OCI-LY7 (cell line): ENCODE measurements at regions of chr10 and their contacts with region 1.

Region 1: GRCh38 chr10:25875556-25876165 is 58.4 kb upstream of the MYO3A start:
- DNase-seq: peak; percentile 88
- H3K4me3 ChIP-seq: no peak overlapping the region
- H3K27ac ChIP-seq: no peak overlapping the region
- H3K4me1 ChIP-seq: peaks cover 14% of the 10 kb centered on the region
- CTCF ChIP-seq: peak; percentile 98

Region 2: DNA sequence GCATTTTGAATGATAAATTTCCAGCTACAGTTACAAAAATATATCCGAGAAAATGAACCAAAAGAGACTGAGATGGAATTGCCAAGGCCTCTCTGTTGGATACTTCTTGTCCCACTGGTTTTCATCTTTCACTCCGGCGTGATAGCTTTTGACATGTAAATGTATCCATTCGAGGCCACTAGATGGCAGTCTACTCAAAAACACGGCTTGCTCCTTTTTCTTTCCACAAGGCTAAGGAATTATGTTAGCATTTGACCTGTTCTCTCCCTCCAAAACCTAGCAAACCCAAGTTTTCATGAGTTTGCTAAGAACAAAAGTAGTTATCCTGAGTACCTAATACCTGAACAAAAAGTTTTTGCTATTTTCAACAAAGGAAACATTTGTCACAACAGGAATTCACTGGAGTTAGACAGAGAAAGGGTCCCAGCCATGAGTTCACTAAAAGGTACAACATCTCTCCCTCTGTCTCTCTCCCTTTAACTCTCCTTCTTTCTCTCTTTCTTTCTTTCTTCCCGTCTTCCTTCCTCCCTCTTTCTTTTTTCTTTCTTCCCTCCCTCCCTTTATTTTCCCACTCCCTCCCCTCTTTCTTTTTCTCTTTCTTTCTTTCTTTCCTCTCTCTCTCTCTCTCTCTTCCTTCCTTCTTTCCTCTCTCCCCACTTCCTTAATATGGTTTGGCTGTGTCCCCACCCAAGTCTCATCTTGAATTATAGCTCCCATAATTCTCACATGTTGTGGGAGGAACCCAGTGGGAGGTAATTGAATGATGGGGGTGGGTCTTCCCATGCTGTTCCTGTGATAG is 149.5 kb before region 1 on chr10:
- CTCF ChIA-PET with region 1: interaction called, 3 read pairs
- POLR2A ChIA-PET with region 1: no interaction called
- intact Hi-C with region 1: loop called (anchors 1 kb)
- DNase-seq: peak; percentile 65
- H3K4me3 ChIP-seq: no peak overlapping the region
- H3K27ac ChIP-seq: no peak overlapping the region
- H3K4me1 ChIP-seq: no peaks in the 10 kb centered on the region
- CTCF ChIP-seq: peak; percentile 91

Region 3: DNA sequence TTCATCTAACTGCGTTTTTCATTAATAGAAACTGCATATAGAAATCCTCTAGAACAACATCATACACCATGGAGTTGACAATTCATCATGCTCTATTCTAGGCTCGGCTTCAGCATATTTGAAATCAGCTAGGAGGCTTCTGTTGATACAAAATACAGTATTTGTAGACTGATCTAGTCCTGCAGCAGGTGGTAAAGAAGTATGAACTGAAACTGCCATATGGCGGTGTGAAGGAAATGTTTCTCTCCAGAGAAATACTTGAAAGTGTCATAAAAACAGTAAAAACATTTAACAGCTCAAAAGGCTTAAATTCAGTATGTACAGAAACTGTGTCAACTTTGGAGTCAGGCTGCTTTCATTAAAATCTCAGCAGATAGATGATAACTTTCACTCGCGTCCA is 26.3 kb after region 1 on chr10:
- CTCF ChIA-PET with region 1: no interaction called
- POLR2A ChIA-PET with region 1: interaction called, 8 read pairs
- intact Hi-C with region 1: loop called (anchors 1 kb)
- DNase-seq: peak; percentile 86
- H3K4me3 ChIP-seq: peak overlapping the region; percentile 43
- H3K27ac ChIP-seq: peak overlapping the region; percentile 86
- H3K4me1 ChIP-seq: peaks cover 38% of the 10 kb centered on the region
- CTCF ChIP-seq: no peak

Region 4: GRCh38 chr10:25982107-25982506 is 106.4 kb after region 1 on chr10:
- CTCF ChIA-PET with region 1: no interaction called
- POLR2A ChIA-PET with region 1: no interaction called
- intact Hi-C with region 1: loop called (anchors 5 kb)
- DNase-seq: peak; percentile 13
- H3K4me3 ChIP-seq: no peak overlapping the region
- H3K27ac ChIP-seq: no peak overlapping the region
- H3K4me1 ChIP-seq: no peaks in the 10 kb centered on the region
- CTCF ChIP-seq: 0 out of 2 replicates have a peak, but pooled peaks have one; percentile 20

Region 5: GRCh38 chr10:26157734-26158133 is 282.1 kb after region 1 on chr10:
- CTCF ChIA-PET with region 1: interaction called, 3 read pairs
- POLR2A ChIA-PET with region 1: no interaction called
- intact Hi-C with region 1: loop called (anchors 1 kb)
- DNase-seq: peak; percentile 69
- H3K4me3 ChIP-seq: no peak overlapping the region
- H3K27ac ChIP-seq: peak overlapping the region; percentile 14
- H3K4me1 ChIP-seq: peaks cover 43% of the 10 kb centered on the region
- CTCF ChIP-seq: peak; percentile 79

Region 6: GRCh38 chr10:26269754-26270153 is 394.1 kb after region 1 on chr10:
- CTCF ChIA-PET with region 1: interaction called, 6 read pairs
- POLR2A ChIA-PET with region 1: no interaction called
- intact Hi-C with region 1: loop called (anchors 2 kb)
- DNase-seq: peak; percentile 71
- H3K4me3 ChIP-seq: no peak overlapping the region
- H3K27ac ChIP-seq: no peak overlapping the region
- H3K4me1 ChIP-seq: no peaks in the 10 kb centered on the region
- CTCF ChIP-seq: peak; percentile 80

Region 7: DNA sequence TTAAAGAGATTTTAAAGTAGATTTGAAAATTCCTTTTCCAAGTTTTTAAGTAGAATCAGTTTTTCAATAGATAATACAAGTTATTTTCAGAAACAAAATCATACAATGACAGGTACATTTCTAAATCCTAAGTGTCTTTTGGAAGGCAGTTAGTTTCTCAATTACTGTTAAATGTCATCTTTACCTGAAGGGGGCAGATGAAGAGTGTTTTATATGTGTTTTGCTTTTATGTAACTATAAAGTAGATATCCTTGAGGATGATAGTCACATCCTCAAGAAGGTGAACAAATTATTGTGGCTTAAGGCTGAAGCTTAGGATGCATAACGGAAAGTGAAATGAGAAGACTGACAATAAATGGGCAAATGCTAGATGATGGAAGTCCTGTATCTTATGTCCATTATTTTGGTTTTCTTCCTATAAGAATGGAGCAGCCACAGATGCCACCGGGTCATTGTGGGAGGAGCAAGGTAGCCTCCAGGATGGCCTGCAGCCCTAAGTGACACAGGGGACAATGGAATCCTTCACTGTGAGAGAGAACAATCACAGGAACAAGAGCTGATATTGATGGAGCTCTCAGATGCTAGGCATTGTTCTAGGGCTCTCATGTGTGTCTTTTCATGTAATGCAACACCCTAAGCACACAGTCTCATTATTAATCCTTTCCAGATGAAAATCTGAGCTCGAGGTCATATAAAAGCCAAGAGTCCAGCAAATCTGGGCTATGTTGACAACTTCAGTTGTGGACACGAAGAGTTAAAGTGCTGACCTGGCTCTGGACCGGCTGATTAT is 1884.0 kb after region 1 on chr10:
- CTCF ChIA-PET with region 1: no interaction called
- POLR2A ChIA-PET with region 1: no interaction called
- intact Hi-C with region 1: no loop called
- DNase-seq: no peak
- H3K4me3 ChIP-seq: no peak overlapping the region
- H3K27ac ChIP-seq: no peak overlapping the region
- H3K4me1 ChIP-seq: no peaks in the 10 kb centered on the region
- CTCF ChIP-seq: peak; percentile 42